B cell (primary cell): ENCODE measurements at regions of chr20 and their contacts with region 1.

Region 1: DNA sequence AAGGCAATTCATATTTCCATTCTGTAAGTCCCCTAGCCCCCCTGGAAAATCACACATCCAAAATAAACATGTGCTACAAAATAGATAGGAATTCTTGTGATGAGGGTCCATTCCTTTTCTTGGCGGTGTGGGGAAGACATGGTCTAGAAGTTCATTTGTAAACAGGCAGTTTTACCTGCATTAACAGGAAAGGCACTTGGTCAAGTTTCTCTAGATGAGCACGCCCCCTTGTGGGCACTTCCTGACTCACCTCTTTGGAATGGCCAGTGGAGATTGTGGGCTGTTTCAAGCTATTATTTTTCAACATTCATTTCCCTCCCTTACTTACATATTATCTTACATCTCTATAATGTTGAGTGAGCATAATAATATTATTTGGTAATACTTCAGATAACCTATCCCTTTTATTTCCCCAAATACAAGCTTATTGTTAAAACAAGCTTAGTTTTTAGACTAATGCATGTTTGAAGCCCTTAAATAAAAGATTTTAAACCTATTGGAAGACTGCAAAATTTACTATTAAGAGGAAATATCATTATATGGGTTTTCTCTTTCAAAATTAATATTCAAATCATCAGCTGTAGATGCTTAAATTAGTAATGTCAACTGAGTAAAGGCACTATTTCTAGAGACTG is 92.1 kb downstream of the TASP1 start:
- DNase-seq: peak; percentile 55
- ATAC-seq: no peak
- H3K4me3 ChIP-seq: no peak overlapping the region
- H3K4me3 Mint-ChIP-seq: no peak overlapping the region
- H3K27ac ChIP-seq: no peak overlapping the region
- H3K27ac Mint-ChIP-seq: no peak overlapping the region
- H3K4me1 ChIP-seq: no peaks in the 10 kb centered on the region
- H3K4me1 Mint-ChIP-seq: no peaks in the 10 kb centered on the region
- H3K27me3 ChIP-seq: no peaks in the 10 kb centered on the region
- H3K27me3 Mint-ChIP-seq: no peaks in the 10 kb centered on the region
- CTCF ChIP-seq: peak; percentile 81

Region 2: DNA sequence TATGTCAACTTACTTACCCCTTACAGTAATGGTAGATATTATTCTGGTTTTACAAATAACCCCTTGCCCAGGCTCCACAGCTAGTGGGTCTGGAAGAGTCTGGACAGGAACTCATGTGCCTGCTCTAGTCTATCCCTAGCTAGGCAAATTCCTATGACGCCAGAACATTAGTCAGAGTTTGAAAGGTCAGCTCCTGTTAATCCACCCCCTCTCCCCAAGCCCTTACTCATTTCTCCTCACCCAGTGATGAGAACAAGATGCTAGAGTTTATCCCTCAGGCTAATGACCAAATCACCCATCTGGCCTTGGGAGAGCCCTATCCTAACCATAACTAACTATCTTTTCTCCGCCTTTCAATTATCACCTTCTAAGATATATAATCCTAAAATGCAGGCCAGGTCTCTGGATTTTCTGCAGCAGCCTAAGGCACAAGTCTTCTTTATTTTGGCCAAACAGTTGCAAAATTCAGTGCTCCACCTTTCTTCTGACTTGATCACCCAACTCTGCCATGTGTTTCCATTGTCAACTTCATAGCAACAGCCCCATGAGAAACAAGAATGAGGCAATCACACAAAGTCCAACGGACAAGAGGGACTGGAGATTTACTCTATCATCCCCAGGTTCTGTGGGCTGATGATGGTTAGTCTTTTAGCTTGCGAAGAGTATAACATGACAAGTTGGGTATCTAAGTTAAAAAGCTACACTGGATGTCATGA is 21.2 kb before region 1 on chr20:
- CTCF ChIA-PET with region 1: interaction called, 15 read pairs
- POLR2A ChIA-PET with region 1: no interaction called
- intact Hi-C with region 1: no loop called
- DNase-seq: no peak
- ATAC-seq: no peak
- H3K4me3 ChIP-seq: no peak overlapping the region
- H3K4me3 Mint-ChIP-seq: no peak overlapping the region
- H3K27ac ChIP-seq: no peak overlapping the region
- H3K27ac Mint-ChIP-seq: no peak overlapping the region
- H3K4me1 ChIP-seq: no peaks in the 10 kb centered on the region
- H3K4me1 Mint-ChIP-seq: no peaks in the 10 kb centered on the region
- H3K27me3 ChIP-seq: no peaks in the 10 kb centered on the region
- H3K27me3 Mint-ChIP-seq: no peaks in the 10 kb centered on the region
- CTCF ChIP-seq: no peak

Region 3: DNA sequence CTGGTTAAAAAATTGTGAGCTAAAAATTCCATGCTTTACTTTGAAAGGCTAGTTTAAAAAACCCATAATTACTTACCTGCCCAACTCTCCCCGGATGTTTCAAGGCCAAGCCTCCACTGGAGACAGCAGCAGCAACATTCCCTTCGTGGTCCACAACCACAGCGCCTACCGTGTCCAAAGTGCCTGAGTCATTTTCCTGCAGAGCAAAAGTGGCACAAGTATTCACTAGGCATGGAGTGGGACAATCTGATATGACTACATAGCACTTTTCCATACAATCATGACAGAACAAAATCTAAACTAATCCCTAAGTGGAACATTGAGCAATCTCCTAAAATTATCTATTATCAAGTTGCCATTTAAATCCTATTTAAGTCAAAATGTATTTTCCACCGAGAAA is 12.7 kb before region 1 on chr20:
- CTCF ChIA-PET with region 1: interaction called, 21 read pairs
- POLR2A ChIA-PET with region 1: no interaction called
- intact Hi-C with region 1: no loop called
- DNase-seq: no peak
- ATAC-seq: no peak
- H3K4me3 ChIP-seq: no peak overlapping the region
- H3K4me3 Mint-ChIP-seq: no peak overlapping the region
- H3K27ac ChIP-seq: no peak overlapping the region
- H3K27ac Mint-ChIP-seq: no peak overlapping the region
- H3K4me1 ChIP-seq: no peaks in the 10 kb centered on the region
- H3K4me1 Mint-ChIP-seq: no peaks in the 10 kb centered on the region
- H3K27me3 ChIP-seq: no peaks in the 10 kb centered on the region
- H3K27me3 Mint-ChIP-seq: no peaks in the 10 kb centered on the region
- CTCF ChIP-seq: no peak

Region 4: DNA sequence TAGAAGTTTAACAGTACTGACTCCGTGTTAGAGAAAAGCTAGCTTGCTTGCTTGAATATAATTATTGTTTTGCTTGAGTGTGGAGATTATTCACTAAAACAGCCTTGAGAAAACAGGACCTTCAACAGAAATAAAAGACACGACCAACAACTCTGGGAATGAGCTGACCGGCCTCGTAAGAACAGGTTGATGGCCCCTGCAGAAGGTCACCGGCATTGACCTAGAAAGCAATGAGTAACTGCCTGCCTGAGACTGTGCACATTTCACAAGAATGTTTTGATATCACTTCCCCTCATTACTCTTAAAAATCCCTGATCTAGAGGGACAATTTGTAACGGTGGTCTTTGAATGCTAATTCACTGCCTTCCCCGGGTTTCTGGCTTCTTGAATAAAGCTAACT is 394.4 kb after region 1 on chr20:
- CTCF ChIA-PET with region 1: no interaction called
- POLR2A ChIA-PET with region 1: no interaction called
- intact Hi-C with region 1: no loop called
- DNase-seq: no peak
- ATAC-seq: no peak
- H3K4me3 ChIP-seq: no peak overlapping the region
- H3K4me3 Mint-ChIP-seq: no peak overlapping the region
- H3K27ac ChIP-seq: no peak overlapping the region
- H3K27ac Mint-ChIP-seq: no peak overlapping the region
- H3K4me1 ChIP-seq: no peaks in the 10 kb centered on the region
- H3K4me1 Mint-ChIP-seq: no peaks in the 10 kb centered on the region
- H3K27me3 ChIP-seq: no peaks in the 10 kb centered on the region
- H3K27me3 Mint-ChIP-seq: peaks cover 7% of the 10 kb centered on the region
- CTCF ChIP-seq: no peak